Breast epithelium (tissue), 4 donors: ENCODE measurements at regions of chr12 and their contacts with region 1.

Region 1: DNA sequence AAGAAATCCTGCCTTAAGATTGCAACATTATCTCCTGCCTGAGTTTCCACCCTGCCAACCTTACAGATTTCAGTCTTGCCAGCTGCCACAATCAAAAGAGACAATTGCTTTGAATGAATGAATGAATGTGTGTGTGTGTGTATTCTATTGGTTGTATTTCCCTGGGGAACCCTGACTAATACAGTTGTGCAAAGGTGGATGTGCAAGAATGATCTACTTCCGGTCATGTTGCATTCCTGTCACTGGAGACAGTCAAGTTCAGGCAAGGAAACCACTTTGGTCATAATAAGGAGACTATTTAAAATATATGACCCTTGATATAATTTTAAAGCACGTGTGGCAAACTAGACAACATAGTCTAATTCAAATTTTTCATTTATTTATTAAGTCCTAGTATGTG is 13.1 kb downstream of the RERG start:
- DNase-seq: no peak
- H3K4me3 ChIP-seq: no peak overlapping the region
- H3K27ac ChIP-seq: peak overlapping the region; percentile 60 to 73
- H3K4me1 ChIP-seq: no peaks in the 10 kb centered on the region
- H3K27me3 ChIP-seq: no peaks in the 10 kb centered on the region
- CTCF ChIP-seq: peak in 2 of 3 donors; percentile 17 to 40
- POLR2A ChIP-seq: no peak

Region 2: GRCh38 chr12:15151161-15152120 is 56.7 kb before region 1 on chr12:
- intact Hi-C with region 1: loop called (anchors 10 kb)
- DNase-seq: no peak
- H3K4me3 ChIP-seq: peak overlapping the region in 1 of 3 donors; percentile 32
- H3K27ac ChIP-seq: peak overlapping the region; percentile 74 to 79
- H3K4me1 ChIP-seq: peaks cover 11 to 13% of the 10 kb centered on the region in 2 donors
- H3K27me3 ChIP-seq: no peaks in the 10 kb centered on the region
- CTCF ChIP-seq: peak; percentile 61 to 73 (median 72)
- POLR2A ChIP-seq: no peak

Region 3: DNA sequence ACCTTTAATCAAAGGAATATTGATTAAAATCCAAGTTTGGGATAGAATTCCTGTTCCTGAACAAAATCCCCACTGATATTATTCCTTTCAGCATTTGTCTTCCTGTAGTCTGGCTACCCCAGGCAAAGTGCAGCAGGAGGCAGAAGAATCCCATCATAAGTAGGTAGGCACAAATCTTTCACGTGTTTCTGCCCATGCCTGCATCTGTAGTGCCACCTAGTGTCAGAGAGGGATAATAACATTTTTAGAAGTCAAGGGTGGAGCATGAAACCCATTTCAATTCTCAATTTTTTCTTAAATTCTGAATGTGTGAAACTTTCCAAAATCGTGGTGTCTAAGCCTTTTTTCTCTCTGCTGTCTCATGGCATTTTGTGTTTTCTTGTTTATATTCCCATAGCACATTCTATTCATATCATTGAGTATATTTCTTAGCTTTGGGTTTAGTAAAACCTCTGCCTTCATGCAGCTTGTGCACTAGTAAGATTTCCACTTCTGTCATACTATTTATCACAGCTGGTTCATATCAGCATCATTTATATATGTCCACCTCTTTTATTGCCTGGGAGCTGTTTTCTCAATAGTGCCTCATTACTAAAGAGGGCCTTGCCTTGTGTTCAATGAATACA is 60.9 kb after region 1 on chr12:
- intact Hi-C with region 1: no loop called
- DNase-seq: no peak
- H3K4me3 ChIP-seq: no peak overlapping the region
- H3K27ac ChIP-seq: no peak overlapping the region
- H3K4me1 ChIP-seq: no peaks in the 10 kb centered on the region
- H3K27me3 ChIP-seq: no peaks in the 10 kb centered on the region
- CTCF ChIP-seq: peak; percentile 69 to 91 (median 84)
- POLR2A ChIP-seq: no peak